ENCODE measurements at regions of chr9 and their contacts with region 1.

Region 1: DNA sequence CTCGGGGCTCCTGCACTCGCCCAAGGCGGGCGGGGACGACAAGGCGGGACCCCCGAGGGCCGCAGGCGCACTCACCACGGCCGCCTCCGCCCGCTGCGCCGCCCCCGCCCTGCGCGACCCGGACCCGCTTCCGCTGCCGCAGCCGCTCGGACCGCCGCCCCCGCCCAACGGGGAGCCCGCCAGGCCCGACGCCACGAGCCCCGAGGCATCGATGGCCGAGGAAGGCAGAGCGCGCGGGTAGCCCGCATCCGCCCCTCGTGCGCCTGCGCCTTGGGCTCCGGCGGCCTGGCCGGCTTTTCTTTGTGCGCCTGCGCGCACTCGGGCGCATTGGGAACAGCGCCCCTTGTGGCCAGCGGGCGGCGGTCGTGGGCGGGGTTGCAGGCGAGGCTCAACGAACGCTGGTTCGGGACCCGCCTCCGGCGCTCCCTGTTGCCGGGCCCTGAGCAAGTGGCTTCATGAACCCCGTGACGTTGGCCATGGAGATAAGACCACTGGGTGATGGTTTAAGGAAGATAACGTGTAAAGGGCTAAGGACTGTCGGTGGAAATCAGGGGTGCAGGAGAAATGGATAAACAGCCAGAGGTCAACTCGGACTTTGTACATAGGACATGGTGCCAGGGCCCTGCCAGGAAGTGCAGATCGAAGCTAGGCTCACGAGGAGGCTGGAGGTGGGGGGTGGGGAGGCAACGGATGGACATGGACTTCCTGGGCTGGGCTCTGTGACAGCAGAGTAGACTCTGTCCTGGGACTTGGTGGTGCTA is at the starts of genes C8G and FBXW5:
- DNase-seq: no peak
- H3K4me3 ChIP-seq: peak within 1 kb of the TSS; percentile 60 to 83
- H3K27ac ChIP-seq: peak within 1 kb of the TSS; percentile 77
- H3K4me1 ChIP-seq: peaks cover 47% of the 10 kb centered on the region
- H3K27me3 ChIP-seq: no peaks in the 10 kb centered on the region
- CTCF ChIP-seq: peak; percentile 94 to 100 (median 99)
- POLR2A ChIP-seq: peak in 1 of 2 donors; percentile 54
- total RNA-seq, gene C8G: not detected
- total RNA-seq, gene FBXW5: 125 TPM

Region 2: DNA sequence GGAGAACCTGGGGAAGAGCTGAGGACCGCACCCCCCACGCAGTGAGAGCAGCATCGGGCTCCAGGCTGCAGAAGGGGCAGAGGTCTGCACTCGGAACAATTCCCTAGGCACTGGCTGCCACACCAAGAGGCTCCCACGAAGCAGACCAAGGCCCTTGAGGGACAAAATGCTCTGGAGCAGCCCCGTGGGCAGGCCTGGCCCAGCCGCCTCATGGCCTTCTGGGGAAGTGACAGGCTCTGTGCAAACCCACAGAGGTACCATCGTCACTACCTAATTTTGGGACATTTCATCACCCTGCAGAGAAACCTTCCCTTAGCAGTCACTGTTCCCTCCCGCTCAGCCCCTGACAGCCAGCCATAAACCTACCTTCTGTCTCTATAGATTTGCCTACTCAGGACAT is 16.1 kb before region 1 on chr9:
- intact Hi-C with region 1: no loop called
- DNase-seq: no peak
- H3K4me3 ChIP-seq: no peak overlapping the region
- H3K27ac ChIP-seq: peak overlapping the region; percentile 5
- H3K4me1 ChIP-seq: peaks cover 8% of the 10 kb centered on the region
- H3K27me3 ChIP-seq: no peaks in the 10 kb centered on the region
- CTCF ChIP-seq: no peak
- POLR2A ChIP-seq: no peak

Region 3: DNA sequence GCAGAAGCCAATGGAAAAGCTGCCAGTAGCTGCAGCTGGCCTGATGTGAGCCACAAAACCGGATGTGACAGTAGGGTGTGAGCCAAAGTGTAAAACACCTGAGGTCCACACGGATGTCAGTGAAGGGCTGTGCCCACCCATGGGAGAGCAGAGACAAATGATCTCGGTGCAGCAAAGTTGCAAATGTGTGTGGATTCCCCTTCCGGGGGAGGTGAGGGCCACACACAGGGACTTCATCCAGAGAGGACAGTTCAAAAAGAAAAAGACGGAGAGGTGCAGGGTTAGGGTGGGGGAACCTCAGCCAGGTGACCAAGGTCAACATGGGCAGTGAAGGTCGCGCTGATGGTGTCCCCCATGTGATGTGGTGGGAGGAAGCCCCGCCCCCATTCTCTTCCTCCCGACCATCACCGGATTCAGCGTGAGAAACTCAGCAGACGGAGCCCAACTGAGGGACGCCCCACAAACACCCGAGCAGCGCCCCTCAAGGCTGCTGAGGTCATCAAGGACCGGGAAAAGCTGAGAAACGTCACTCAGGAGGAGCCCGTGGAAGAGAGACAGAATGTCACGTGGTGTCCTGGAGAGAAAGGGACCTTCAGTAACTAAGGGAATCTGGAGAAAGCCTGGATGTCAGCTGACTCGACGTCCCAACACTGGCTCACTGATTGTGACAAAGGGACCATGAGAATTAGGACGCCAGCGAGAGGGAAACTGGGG is 21.2 kb after region 1 on chr9:
- intact Hi-C with region 1: no loop called
- DNase-seq: no peak
- H3K4me3 ChIP-seq: no peak overlapping the region
- H3K27ac ChIP-seq: no peak overlapping the region
- H3K4me1 ChIP-seq: peaks cover 32% of the 10 kb centered on the region
- H3K27me3 ChIP-seq: no peaks in the 10 kb centered on the region
- CTCF ChIP-seq: no peak
- POLR2A ChIP-seq: no peak

Region 4: GRCh38 chr9:137029058-137029936 is 84.6 kb after region 1 on chr9:
- intact Hi-C with region 1: loop called (anchors 5 kb)
- DNase-seq: no peak
- H3K4me3 ChIP-seq: peak overlapping the region; percentile 67 to 76
- H3K27ac ChIP-seq: peak overlapping the region; percentile 77
- H3K4me1 ChIP-seq: peaks cover 40% of the 10 kb centered on the region
- H3K27me3 ChIP-seq: no peaks in the 10 kb centered on the region
- CTCF ChIP-seq: peak; percentile 69 to 75 (median 75)
- POLR2A ChIP-seq: no peak

Measured in vagina (tissue), 2 donors.